PC-3 (cell line): ENCODE measurements at regions of chr6 and their contacts with region 1.

Region 1: DNA sequence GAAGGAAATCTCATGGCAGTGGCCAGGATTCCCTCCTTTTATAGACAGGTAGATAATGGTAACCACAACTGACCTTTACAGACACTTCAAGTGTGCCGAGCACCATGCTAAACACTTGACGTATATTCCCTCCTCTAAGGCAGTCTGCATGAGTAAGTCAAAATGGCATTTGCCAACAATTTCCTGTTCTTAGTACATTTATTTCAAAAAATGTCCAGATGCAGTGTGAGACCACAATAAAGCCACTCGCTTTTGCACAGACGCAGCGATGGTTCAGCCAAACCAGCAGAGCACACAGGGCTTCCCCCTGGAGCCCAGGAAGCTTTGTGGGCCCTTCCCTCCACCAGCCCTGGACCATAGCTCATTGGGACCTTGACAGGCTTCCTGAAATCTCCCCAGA is 16.4 kb upstream of the GPR6 start:
- DNase-seq: peak; percentile 79
- ATAC-seq: peak; percentile 58
- H3K4me3 ChIP-seq: no peak overlapping the region
- H3K27ac ChIP-seq: peak overlapping the region; percentile 61
- H3K4me1 ChIP-seq: peaks cover 26% of the 10 kb centered on the region
- H3K27me3 ChIP-seq: no peaks in the 10 kb centered on the region
- CTCF ChIP-seq: no peak

Region 2: GRCh38 chr6:109628158-109629000 is 333.3 kb before region 1 on chr6:
- CTCF ChIA-PET with region 1: no interaction called
- POLR2A ChIA-PET with region 1: no interaction called
- intact Hi-C with region 1: no loop called
- DNase-seq: no peak
- ATAC-seq: no peak
- H3K4me3 ChIP-seq: no peak overlapping the region
- H3K27ac ChIP-seq: no peak overlapping the region
- H3K4me1 ChIP-seq: no peaks in the 10 kb centered on the region
- H3K27me3 ChIP-seq: no peaks in the 10 kb centered on the region
- CTCF ChIP-seq: no peak

Region 3: DNA sequence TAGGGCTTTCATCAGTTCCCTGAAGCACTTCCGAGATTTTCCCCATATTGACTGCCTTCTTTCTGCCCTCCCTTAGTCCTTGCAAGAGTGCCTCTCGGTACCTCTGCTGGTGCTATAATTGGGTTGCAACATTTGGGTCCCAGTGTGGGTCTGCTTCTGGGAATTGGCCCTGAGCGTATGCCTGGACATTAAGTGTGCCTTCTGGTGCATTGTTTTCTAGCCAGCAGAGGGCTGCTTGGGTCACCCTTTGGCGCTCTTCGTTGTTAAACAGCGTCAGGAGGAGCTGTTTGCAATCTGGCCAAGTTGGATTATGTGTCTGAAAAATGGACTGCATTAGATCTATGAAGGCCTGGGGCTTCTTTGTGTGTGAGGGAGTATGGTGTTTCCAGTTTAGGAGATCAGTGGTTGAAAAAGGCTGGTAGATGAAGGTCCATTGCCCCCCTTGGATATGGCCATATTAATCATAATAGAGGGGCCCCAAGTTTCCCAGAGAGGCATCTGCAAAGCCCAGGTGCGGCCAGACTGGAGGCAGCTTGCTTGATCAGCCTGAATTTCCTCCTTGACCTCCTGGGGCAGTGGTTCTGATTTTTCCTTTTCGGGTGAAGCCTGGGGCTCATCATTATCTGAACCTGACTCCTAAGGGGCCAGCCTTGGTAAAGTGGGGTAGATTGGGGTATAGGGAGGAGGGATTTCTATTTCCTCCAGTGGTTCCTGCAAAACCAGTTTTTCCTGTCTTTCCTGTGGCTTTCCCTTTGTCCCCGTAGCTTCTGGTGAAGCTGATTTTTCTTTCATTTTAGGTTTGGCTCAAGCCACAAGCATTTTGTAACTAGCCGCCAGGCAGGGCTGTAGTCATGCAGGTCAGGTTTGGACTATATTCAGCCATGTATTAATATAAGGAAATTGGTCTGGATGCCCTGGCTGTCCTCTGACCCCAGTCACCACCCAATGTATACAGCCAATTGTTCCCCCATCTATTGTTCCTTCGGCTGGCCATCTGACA is 68.9 kb before region 1 on chr6:
- CTCF ChIA-PET with region 1: no interaction called
- POLR2A ChIA-PET with region 1: interaction called, 14 read pairs
- intact Hi-C with region 1: no loop called
- DNase-seq: peak; percentile 92
- ATAC-seq: peak; percentile 78
- H3K4me3 ChIP-seq: peak overlapping the region; percentile 58
- H3K27ac ChIP-seq: peak overlapping the region; percentile 68
- H3K4me1 ChIP-seq: peaks cover 19% of the 10 kb centered on the region
- H3K27me3 ChIP-seq: no peaks in the 10 kb centered on the region
- CTCF ChIP-seq: peak; percentile 46

Region 4: DNA sequence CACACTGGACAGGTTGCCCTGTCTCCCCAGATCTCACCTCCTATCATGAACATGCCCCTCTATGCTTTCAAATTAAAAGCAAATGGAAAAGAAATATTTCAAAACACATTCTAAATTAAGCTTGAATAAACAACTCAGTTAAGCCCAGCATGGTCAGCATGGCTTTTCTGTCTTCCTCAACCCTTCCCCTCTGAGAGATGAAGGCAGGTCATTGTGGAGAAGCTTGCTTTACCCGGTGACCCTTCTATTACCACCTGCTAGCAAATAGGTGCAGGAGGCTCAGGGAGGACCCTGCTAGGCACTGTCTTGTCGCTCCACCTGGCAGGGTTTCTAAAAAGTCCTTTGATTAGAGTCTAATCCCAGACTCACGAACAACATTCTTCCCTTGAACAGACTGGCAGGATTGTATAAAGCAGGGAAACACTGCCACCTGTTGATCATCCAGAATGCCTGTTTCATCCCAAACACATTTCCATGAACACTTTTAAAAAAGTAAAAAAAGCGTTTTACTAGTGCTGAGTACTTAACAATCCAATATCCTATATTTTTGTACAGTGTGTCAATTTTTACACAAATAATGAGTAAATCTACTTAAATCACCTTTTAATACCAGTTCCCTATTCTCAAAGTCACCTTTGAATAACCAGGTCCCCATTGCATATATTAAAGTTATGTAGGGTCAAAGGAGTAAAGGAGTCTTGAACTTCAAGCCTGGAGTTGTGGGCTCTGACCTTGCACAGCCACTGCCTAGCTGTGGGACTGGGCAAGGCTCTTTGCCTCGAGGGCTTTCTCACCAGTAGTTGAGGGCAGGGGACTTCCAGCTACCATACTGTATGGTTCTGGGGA is 92.0 kb after region 1 on chr6:
- CTCF ChIA-PET with region 1: no interaction called
- POLR2A ChIA-PET with region 1: no interaction called
- intact Hi-C with region 1: no loop called
- DNase-seq: peak; percentile 46
- ATAC-seq: peak; percentile 79
- H3K4me3 ChIP-seq: no peak overlapping the region
- H3K27ac ChIP-seq: no peak overlapping the region
- H3K4me1 ChIP-seq: no peaks in the 10 kb centered on the region
- H3K27me3 ChIP-seq: peaks cover 16% of the 10 kb centered on the region; the same call in 1 of the 2 replicates
- CTCF ChIP-seq: peak; percentile 76

Region 5: GRCh38 chr6:110083875-110084585 is 122.4 kb after region 1 on chr6:
- CTCF ChIA-PET with region 1: no interaction called
- POLR2A ChIA-PET with region 1: no interaction called
- intact Hi-C with region 1: no loop called
- DNase-seq: no peak
- ATAC-seq: no peak
- H3K4me3 ChIP-seq: no peak overlapping the region
- H3K27ac ChIP-seq: no peak overlapping the region
- H3K4me1 ChIP-seq: no peaks in the 10 kb centered on the region
- H3K27me3 ChIP-seq: no peaks in the 10 kb centered on the region
- CTCF ChIP-seq: no peak

Region 6: DNA sequence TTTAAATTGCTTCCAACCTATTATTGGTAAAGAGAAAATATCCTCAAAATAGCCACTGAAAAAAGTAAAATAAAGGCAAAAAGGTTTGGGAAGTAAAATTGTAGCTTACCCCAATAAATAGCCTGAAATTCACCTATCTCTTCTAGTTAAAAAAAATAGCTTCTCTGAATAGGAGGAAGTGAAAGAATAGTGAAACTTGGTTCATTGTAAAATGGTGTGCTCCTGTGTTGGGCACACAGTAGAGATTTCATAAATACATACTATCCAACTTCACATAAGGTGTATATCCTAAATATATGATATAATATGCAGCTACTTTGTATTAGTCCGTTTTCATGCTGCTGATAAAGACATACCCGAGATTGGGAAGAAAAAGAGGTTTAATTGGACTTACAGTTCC is 808.3 kb after region 1 on chr6:
- CTCF ChIA-PET with region 1: no interaction called
- POLR2A ChIA-PET with region 1: interaction called, 25 read pairs
- intact Hi-C with region 1: no loop called
- DNase-seq: no peak
- ATAC-seq: no peak
- H3K4me3 ChIP-seq: no peak overlapping the region
- H3K27ac ChIP-seq: no peak overlapping the region
- H3K4me1 ChIP-seq: no peaks in the 10 kb centered on the region
- H3K27me3 ChIP-seq: no peaks in the 10 kb centered on the region
- CTCF ChIP-seq: no peak